Mammary epithelial cell (primary cell): ENCODE measurements at regions of chr6 and their contacts with region 1.

Region 1: GRCh38 chr6:79525272-79526100 is 11.7 kb downstream of the LCA5 start:
- DNase-seq: peak; percentile 85
- H3K4me3 ChIP-seq: no peak overlapping the region
- H3K27ac ChIP-seq: peak overlapping the region; percentile 66
- H3K4me1 ChIP-seq: peaks cover 24% of the 10 kb centered on the region
- H3K27me3 ChIP-seq: no peaks in the 10 kb centered on the region
- CTCF ChIP-seq: no peak

Region 2: DNA sequence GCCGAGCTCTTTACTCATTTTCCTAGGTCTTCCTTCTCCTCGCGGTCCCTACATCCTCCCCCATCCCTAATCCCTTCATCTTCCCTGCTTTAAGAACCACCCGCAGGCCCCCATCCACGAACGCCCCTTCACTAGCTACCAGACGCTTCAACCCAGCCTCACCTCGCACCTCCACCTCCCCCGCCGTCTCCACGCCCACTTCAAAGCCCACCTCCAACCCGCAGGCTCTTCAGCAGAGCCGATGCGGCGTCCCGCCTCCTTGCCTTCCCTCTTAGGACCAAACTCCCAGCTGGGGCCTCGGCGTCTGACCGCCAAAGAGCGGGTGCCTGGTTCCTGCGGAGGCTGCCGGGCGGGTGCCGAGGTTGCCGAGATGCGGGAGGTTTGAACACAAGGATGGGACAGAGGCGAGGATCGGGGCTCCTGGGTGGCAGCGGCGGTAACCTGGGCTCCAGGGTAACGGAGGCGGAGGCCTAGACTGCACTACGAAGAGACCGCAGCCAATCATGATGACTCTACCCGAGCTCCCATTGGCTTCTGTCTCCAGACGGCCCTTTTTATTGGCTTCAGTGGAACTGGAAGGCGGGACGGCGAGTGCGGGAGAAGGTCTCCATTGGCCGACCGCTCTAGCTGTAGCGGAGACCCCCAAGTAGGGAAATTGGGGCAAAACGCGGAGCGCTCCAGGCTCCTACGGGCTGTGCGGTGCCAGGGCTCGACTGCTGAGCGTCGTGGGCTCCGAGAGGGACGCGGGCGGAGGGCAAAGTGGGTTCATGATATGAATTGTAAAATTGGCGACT is 11.7 kb after region 1 on chr6 and contains the start of gene LCA5:
- CTCF ChIA-PET with region 1: no interaction called
- dilution Hi-C with region 1: no loop called
- in situ Hi-C with region 1: no loop called
- intact Hi-C with region 1: loop called (anchors 1 kb)
- DNase-seq: peak; percentile 98
- H3K4me3 ChIP-seq: peak within 1 kb of the TSS; percentile 95 to 98 (median 97)
- H3K27ac ChIP-seq: peak within 1 kb of the TSS; percentile 99
- H3K4me1 ChIP-seq: no peaks in the 10 kb centered on the region
- H3K27me3 ChIP-seq: no peaks in the 10 kb centered on the region
- CTCF ChIP-seq: no peak
- total RNA-seq, gene LCA5: 4.8 to 20.0 TPM